ENCODE measurements at regions of chr19 and their contacts with region 1.

Region 1: GRCh38 chr19:12112701-12113100 is 27.4 kb downstream of the ZNF20 start:
- DNase-seq: no peak
- H3K4me3 ChIP-seq: no peak overlapping the region
- H3K27ac ChIP-seq: no peak overlapping the region
- H3K4me1 ChIP-seq: no peaks in the 10 kb centered on the region
- H3K27me3 ChIP-seq: no peaks in the 10 kb centered on the region
- CTCF ChIP-seq: no peak

Region 2: GRCh38 chr19:11924886-11925650 is 187.6 kb before region 1 on chr19 and contains the start of gene ZNF700:
- CTCF ChIA-PET with region 1: no interaction called
- POLR2A ChIA-PET with region 1: interaction called, 12 read pairs
- intact Hi-C with region 1: no loop called
- DNase-seq: peak; percentile 96
- H3K4me3 ChIP-seq: peak within 1 kb of the TSS; percentile 82
- H3K27ac ChIP-seq: peak within 1 kb of the TSS; percentile 90
- H3K4me1 ChIP-seq: no peaks in the 10 kb centered on the region
- H3K27me3 ChIP-seq: no peaks in the 10 kb centered on the region
- CTCF ChIP-seq: no peak
- total RNA-seq, gene ZNF700: 10.9 and 11.0 TPM in 2 replicates

Region 3: DNA sequence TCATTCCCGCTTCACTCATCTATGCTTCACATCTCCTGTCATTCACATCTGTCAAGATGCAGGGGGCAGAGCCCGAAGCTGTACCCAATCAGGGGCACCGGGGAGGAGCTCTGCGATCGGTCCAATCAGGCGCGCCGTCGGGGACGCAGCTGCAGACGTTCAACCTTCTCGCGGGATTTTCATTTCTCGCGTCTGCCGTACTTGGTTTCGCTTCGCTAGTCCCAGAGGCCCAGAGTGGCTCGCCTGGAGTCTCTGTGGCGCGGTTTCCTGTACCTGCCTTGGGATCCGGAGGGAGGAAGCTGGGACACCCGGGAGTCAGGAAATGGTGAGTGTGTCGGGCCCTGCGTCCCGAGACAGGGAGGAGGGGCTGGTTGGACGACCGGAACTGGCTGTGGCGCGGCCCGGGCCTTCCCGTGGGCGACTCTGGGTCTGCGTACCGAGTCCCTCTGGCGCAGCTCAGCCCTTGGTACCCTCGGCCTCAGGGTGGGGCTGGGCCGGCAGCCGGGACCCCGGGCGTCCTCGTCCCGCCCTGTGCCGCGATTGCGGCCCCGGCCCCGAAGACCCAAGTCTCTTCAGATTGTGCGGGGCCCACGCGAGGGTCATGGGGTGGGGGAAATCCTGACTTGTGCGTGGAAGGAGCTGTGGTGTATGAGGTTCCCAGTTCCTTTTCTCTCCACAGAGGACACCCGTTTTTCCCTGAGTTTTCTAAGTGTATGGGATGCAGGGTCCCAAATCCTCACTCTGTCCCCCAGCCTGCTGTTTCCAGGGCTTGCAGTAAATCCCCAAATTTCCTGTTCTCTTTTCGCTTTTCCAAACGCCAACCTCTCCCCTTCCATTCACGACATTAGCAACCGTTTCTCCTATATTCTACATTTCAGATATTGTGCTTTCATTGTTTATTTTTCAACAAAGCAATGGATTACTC is 50.4 kb after region 1 on chr19 and contains the start of gene ZNF136:
- CTCF ChIA-PET with region 1: no interaction called
- POLR2A ChIA-PET with region 1: no interaction called
- intact Hi-C with region 1: no loop called
- DNase-seq: peak; percentile 97
- H3K4me3 ChIP-seq: peak within 1 kb of the TSS; percentile 79
- H3K27ac ChIP-seq: peak within 1 kb of the TSS; percentile 90
- H3K4me1 ChIP-seq: no peaks in the 10 kb centered on the region
- H3K27me3 ChIP-seq: no peaks in the 10 kb centered on the region
- CTCF ChIP-seq: no peak
- total RNA-seq, gene ZNF136: 9.6 and 12.2 TPM in 2 replicates

Region 4: GRCh38 chr19:12943437-12944044 is 830.8 kb after region 1 on chr19:
- CTCF ChIA-PET with region 1: no interaction called
- POLR2A ChIA-PET with region 1: interaction called, 14 read pairs
- intact Hi-C with region 1: no loop called
- DNase-seq: no peak
- H3K4me3 ChIP-seq: no peak overlapping the region
- H3K27ac ChIP-seq: peak overlapping the region; percentile 46
- H3K4me1 ChIP-seq: peaks cover 33% of the 10 kb centered on the region
- H3K27me3 ChIP-seq: no peaks in the 10 kb centered on the region
- CTCF ChIP-seq: no peak